ENCODE measurements at regions of chr20 and their contacts with region 1.

Region 1: DNA sequence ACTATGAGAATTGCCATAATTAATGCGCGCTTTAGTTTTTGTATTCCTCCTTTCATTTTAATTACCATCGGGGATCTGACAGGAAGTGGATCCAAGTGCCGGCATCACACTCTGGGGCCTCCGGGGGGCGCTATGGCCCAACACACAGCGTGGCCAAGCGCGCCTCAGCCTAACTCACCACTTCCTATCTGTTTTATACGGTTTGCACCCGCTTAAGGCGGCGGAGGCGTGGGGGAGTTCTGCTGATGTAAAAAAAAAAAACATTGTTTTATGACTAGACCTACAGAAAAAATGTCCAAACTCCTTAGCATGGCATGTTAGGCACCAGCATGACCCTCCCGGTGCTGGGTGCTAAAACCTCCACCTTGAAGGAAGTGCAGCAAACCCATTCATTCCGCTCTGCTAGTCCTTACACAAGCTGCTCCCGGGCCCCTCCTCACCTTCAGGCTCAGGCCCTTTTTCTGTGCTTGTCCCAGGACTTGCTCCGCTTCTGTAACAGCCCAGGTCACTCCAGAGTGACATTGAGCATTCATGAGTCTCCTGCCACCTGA is 4.5 kb upstream of the EBF4 start:
- DNase-seq: peak; percentile 79
- H3K4me3 ChIP-seq: no peak overlapping the region
- H3K27ac ChIP-seq: no peak overlapping the region
- H3K4me1 ChIP-seq: no peaks in the 10 kb centered on the region
- H3K27me3 ChIP-seq: peaks cover 14% of the 10 kb centered on the region
- CTCF ChIP-seq: peak; percentile 96

Region 2: DNA sequence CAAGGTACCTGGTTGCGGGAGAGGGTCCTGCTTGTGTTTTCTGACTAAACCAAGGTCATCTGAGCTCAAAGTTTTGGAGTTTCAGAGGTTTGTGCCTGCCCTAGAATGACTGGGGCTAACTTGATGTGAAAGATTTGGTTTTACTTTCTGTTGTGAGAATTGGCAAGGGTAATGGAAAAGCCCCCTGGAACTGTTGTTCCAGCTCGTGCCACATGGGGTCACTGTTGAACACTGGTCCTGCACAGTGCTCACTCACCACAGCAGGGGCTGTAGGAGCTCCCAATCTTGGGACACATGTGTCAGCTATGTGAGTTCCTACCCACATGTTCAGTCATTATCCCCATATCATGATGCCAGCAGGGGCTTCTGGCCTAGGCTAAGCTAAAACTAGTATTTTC is 300.9 kb before region 1 on chr20:
- CTCF ChIA-PET with region 1: no interaction called
- POLR2A ChIA-PET with region 1: no interaction called
- intact Hi-C with region 1: no loop called
- DNase-seq: peak; percentile 54
- H3K4me3 ChIP-seq: no peak overlapping the region
- H3K27ac ChIP-seq: no peak overlapping the region
- H3K4me1 ChIP-seq: no peaks in the 10 kb centered on the region
- H3K27me3 ChIP-seq: no peaks in the 10 kb centered on the region
- CTCF ChIP-seq: peak; percentile 69

Region 3: GRCh38 chr20:2742934-2743559 is 54.9 kb after region 1 on chr20:
- CTCF ChIA-PET with region 1: interaction called, 3 read pairs
- POLR2A ChIA-PET with region 1: no interaction called
- intact Hi-C with region 1: loop called (anchors 1 kb)
- DNase-seq: peak; percentile 82
- H3K4me3 ChIP-seq: no peak overlapping the region
- H3K27ac ChIP-seq: no peak overlapping the region
- H3K4me1 ChIP-seq: no peaks in the 10 kb centered on the region
- H3K27me3 ChIP-seq: peaks cover 2% of the 10 kb centered on the region
- CTCF ChIP-seq: peak; percentile 98

Region 4: GRCh38 chr20:2829376-2829775 is 141.3 kb after region 1 on chr20:
- CTCF ChIA-PET with region 1: interaction called, 11 read pairs
- POLR2A ChIA-PET with region 1: no interaction called
- intact Hi-C with region 1: no loop called
- DNase-seq: no peak
- H3K4me3 ChIP-seq: no peak overlapping the region
- H3K27ac ChIP-seq: no peak overlapping the region
- H3K4me1 ChIP-seq: no peaks in the 10 kb centered on the region
- H3K27me3 ChIP-seq: no peaks in the 10 kb centered on the region
- CTCF ChIP-seq: no peak

Region 5: DNA sequence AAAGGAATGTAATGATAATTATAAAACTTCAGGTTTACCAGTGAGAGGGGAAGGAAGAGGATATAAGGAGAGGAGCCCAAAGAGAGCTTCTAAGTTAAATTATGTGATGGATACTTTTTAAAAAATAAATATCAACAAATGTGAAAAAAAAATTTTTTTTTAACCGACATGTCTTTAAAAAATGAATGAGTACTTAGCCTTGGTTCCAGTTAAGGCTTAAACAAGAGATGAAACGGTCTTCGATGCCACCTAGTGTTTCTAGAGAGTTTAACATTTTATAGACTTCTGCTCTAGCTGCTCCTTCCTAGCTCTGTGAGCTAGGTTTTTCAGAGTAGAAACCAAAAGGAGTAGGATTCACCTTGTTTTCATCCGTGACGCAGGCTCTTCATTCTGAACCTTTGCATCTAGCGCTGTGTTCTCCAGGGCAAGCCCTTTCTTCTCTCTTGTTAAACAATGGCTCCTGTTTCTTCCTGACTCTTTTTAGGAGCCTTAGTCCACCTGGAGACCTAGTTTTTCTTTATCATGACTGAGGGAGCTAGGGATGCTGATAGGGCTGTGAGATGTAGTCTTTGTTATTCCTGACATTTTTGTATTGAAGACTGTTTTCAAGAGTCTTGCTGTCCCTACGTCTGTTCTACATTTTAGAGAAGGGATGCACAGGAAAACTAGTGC is 312.9 kb after region 1 on chr20:
- CTCF ChIA-PET with region 1: interaction called, 12 read pairs
- POLR2A ChIA-PET with region 1: no interaction called
- intact Hi-C with region 1: no loop called
- DNase-seq: peak; percentile 76
- H3K4me3 ChIP-seq: no peak overlapping the region
- H3K27ac ChIP-seq: no peak overlapping the region
- H3K4me1 ChIP-seq: no peaks in the 10 kb centered on the region
- H3K27me3 ChIP-seq: no peaks in the 10 kb centered on the region
- CTCF ChIP-seq: peak; percentile 64

Region 6: DNA sequence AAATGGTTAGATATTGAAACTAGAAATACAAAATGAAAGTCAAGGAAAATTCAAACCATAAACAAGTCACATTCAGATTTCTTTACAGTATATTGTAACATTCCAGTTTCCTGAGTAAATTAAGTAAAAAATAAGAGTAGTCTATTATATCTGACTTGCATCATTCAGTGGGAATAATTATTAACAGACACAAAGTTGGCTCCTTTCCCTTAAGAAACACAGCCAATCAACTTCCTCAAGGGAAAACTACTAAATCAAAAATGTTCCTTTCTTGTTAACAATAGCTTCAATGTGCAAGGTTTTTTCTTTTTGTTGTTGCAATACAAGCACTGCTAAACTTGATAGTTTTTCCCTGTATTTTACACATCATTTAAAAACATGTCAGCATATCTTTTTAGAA is 686.2 kb after region 1 on chr20:
- CTCF ChIA-PET with region 1: no interaction called
- POLR2A ChIA-PET with region 1: no interaction called
- intact Hi-C with region 1: no loop called
- DNase-seq: no peak
- H3K4me3 ChIP-seq: no peak overlapping the region
- H3K27ac ChIP-seq: peak overlapping the region; percentile 43
- H3K4me1 ChIP-seq: peaks cover 11% of the 10 kb centered on the region
- H3K27me3 ChIP-seq: no peaks in the 10 kb centered on the region
- CTCF ChIP-seq: no peak